ENCODE measurements at regions of chr1 and their contacts with region 1.

Region 1: GRCh38 chr1:171929121-171929520 is 87.8 kb downstream of the DNM3 start:
- DNase-seq: no peak
- H3K4me3 ChIP-seq: no peak overlapping the region
- H3K27ac ChIP-seq: no peak overlapping the region
- H3K4me1 ChIP-seq: no peaks in the 10 kb centered on the region
- H3K27me3 ChIP-seq: no peaks in the 10 kb centered on the region
- CTCF ChIP-seq: peak in 1 of 5 experiments; percentile 14
- EP300 ChIP-seq: no peak
- POLR2A ChIP-seq: no peak

Region 2: GRCh38 chr1:171966426-171967220 is 37.5 kb after region 1 on chr1:
- in situ Hi-C with region 1: no loop called
- intact Hi-C with region 1: loop called (anchors 1 kb)
- DNase-seq: no peak
- H3K4me3 ChIP-seq: no peak overlapping the region
- H3K27ac ChIP-seq: no peak overlapping the region
- H3K4me1 ChIP-seq: no peaks in the 10 kb centered on the region
- H3K27me3 ChIP-seq: no peaks in the 10 kb centered on the region
- CTCF ChIP-seq: no peak
- EP300 ChIP-seq: no peak
- POLR2A ChIP-seq: no peak

Region 3: DNA sequence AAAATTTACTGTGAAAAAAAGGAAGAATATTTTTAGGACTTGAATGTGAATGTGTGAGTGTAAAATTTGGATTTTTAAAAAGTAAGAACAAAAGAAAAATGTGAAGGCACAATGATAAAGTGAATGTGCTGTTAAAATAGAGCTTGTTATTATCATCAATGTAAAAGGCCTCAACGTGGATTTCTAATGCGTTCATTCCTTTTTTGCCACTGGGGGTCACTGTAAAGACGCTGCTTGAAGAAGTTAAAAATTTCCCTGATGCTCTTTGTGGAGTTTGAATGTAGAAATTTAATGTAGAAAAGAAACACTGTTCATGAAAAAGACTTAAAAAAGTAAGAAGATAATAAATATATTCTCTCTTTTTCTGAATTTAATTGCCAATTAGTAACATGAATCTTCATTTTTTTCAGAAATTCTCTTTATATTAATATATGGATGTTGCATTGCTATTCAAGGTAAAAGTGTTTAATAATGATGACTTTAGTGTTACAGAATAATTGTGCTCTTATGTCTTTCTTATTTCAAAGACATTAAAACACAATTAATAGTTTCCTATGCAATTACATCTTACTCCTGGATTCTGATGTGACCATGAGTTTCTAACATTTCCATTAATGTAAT is 73.7 kb after region 1 on chr1:
- in situ Hi-C with region 1: no loop called
- intact Hi-C with region 1: no loop called
- DNase-seq: peak; percentile 14
- H3K4me3 ChIP-seq: no peak overlapping the region
- H3K27ac ChIP-seq: no peak overlapping the region
- H3K4me1 ChIP-seq: peaks cover 0 to 4% (median 0%) of the 10 kb centered on the region in 4 donors
- H3K27me3 ChIP-seq: no peaks in the 10 kb centered on the region
- CTCF ChIP-seq: peak; percentile 53 to 62 (median 58)
- EP300 ChIP-seq: no peak
- POLR2A ChIP-seq: no peak

Measured in transverse colon (tissue), 4 donors.